ENCODE measurements at regions of chr10 and their contacts with region 1.

Region 1: DNA sequence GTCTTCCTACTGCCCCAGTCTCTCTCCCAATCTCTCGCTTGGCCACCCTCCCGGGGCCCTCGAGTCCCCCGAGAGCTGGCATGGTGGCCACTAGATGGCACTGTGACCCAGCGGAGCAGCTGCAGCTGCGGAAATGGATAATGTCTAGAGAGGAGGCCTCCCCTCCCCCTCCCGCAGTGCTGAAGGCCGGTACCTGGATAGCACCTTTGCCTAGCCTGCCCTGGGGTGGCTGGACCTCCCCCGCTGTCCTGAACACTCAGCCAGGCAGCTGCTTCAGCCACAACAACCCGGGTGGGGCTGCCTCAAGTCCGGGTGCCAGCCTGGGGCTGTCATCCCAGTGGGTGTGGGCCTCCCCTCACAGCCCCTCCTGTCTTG is 65.2 kb downstream of the GOLGA7B start:
- DNase-seq: peak; percentile 78
- H3K4me3 Mint-ChIP-seq: no peak overlapping the region
- H3K27ac Mint-ChIP-seq: no peak overlapping the region
- H3K4me1 Mint-ChIP-seq: peaks cover 4% of the 10 kb centered on the region
- H3K27me3 Mint-ChIP-seq: peaks cover 13% of the 10 kb centered on the region

Region 2: DNA sequence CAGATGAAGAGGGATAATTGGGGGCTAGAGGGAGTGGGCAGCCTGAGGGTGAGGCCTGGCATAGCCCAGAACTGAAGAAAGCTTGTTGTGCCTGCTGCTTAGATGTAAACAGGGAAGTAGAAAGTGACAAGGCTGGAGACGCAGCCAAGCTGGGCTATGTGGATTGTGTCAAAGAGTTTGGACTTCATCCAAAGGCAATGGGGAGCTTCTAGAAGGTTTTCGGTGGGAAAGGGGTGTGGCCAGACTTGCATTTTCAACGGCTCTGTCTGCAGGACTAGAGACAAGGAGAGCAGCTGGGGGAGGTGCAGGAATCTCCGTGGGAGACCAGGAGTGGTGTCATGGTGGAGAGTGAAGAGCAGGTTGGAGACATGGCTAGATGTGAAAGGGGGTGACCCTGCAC is 16.4 kb before region 1 on chr10:
- CTCF ChIA-PET with region 1: interaction called, 12 read pairs
- POLR2A ChIA-PET with region 1: no interaction called
- DNase-seq: no peak
- H3K4me3 Mint-ChIP-seq: no peak overlapping the region
- H3K27ac Mint-ChIP-seq: no peak overlapping the region
- H3K4me1 Mint-ChIP-seq: no peaks in the 10 kb centered on the region
- H3K27me3 Mint-ChIP-seq: peaks cover 3% of the 10 kb centered on the region

Region 3: DNA sequence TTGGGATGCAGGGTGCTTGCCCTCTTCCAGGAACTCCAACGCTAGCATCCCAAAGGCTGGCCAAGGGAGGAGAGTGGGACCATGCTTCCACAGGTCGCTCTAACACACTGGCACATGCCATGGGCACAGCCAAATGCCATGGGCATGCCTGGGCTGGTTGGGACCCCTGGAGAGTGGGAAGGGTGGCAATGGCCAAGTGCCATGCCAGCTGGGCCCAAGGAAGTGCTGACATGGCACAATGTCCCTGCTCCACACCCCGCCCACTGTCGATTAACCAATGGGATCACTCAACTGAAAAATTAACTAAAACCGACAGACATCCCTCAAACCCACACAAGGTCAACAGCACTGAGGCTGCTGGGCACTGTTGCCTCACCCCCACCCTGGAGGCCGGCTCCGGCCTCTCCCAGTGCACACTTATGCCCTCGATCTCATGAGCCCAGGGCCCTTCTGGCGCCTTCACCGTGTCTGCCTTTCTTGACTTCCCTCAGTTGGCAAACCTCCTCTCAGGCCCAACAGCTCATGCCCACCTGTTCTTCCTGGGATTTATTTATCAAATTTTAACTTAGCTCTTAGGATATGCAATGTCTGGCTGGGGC is 18.2 kb after region 1 on chr10:
- CTCF ChIA-PET with region 1: no interaction called
- POLR2A ChIA-PET with region 1: no interaction called
- DNase-seq: no peak
- H3K4me3 Mint-ChIP-seq: no peak overlapping the region
- H3K27ac Mint-ChIP-seq: no peak overlapping the region
- H3K4me1 Mint-ChIP-seq: no peaks in the 10 kb centered on the region
- H3K27me3 Mint-ChIP-seq: peaks cover 6% of the 10 kb centered on the region

Region 4: GRCh38 chr10:98041372-98042043 is 126.7 kb after region 1 on chr10:
- CTCF ChIA-PET with region 1: interaction called, 20 read pairs
- POLR2A ChIA-PET with region 1: no interaction called
- DNase-seq: peak; percentile 45
- H3K4me3 Mint-ChIP-seq: no peak overlapping the region
- H3K27ac Mint-ChIP-seq: no peak overlapping the region
- H3K4me1 Mint-ChIP-seq: no peaks in the 10 kb centered on the region
- H3K27me3 Mint-ChIP-seq: peaks cover 68% of the 10 kb centered on the region

Measured in activated CD4-positive, alpha-beta T cell treated with anti-CD3 and anti-CD28 coated beads, Interleukin-2, amount 10 ng/mL, durations not matched to agents 7 days and 5 days (primary cell).